Dorsolateral prefrontal cortex (tissue), 120 donors: ENCODE measurements at regions of chr19 and their contacts with region 1.

Region 1: GRCh38 chr19:44770550-44771257 is 7.0 kb upstream of the CBLC start:
- DNase-seq: peak in 9 of 10 donors; percentile 31 to 87 (median 73)
- H3K4me3 ChIP-seq: peak overlapping the region in 1 of 59 donors; percentile 14
- H3K27ac ChIP-seq: no peak overlapping the region
- H3K27me3 ChIP-seq: peaks cover 0 to 25% (median 0%) of the 10 kb centered on the region in 45 donors
- CTCF ChIP-seq: peak; percentile 77 to 98 (median 89)

Region 2: GRCh38 chr19:44723952-44724319 is 46.8 kb before region 1 on chr19:
- intact Hi-C with region 1: loop called (anchors 1 to 2 kb)
- DNase-seq: peak in 9 of 10 donors; percentile 50 to 85 (median 69)
- H3K4me3 ChIP-seq: no peak overlapping the region
- H3K27ac ChIP-seq: no peak overlapping the region
- H3K27me3 ChIP-seq: peaks cover 0 to 9% (median 0%) of the 10 kb centered on the region in 45 donors
- CTCF ChIP-seq: peak; percentile 87 to 100 (median 98)

Region 3: GRCh38 chr19:44808463-44809371 is 38.0 kb after region 1 on chr19 and contains the start of gene BCAM:
- intact Hi-C with region 1: no loop called
- DNase-seq: peak in 2 of 10 donors; percentile 42 to 64
- H3K4me3 ChIP-seq: peak within 1 kb of the TSS; percentile 20 to 70 (median 55)
- H3K27ac ChIP-seq: peak within 1 kb of the TSS in 32 of 59 donors; percentile 2 to 70 (median 45)
- H3K27me3 ChIP-seq: peaks cover 0 to 5% (median 0%) of the 10 kb centered on the region in 45 donors
- CTCF ChIP-seq: peak in 2 of 56 donors; percentile 0 to 8
- total RNA-seq, gene BCAM: 9.2 to 58.9 (median 22.6) TPM